Body of pancreas (tissue), 4 donors: ENCODE measurements at regions of chr2 and their contacts with region 1.

Region 1: GRCh38 chr2:165953655-165954606 is at the start of gene TTC21B:
- DNase-seq: peak; percentile 94 to 96 (median 96)
- ATAC-seq: peak; percentile 97
- H3K4me3 ChIP-seq: peak within 1 kb of the TSS; percentile 45 to 99
- H3K27ac ChIP-seq: peak within 1 kb of the TSS; percentile 87 to 96 (median 90)
- H3K4me1 ChIP-seq: peaks cover 34% of the 10 kb centered on the region
- H3K27me3 ChIP-seq: no peaks in the 10 kb centered on the region
- CTCF ChIP-seq: peak; percentile 65 to 92 (median 87)
- POLR2A ChIP-seq: peak; percentile 69 to 85 (median 83)
- total RNA-seq, gene TTC21B: 27.4 to 29.3 TPM

Region 2: DNA sequence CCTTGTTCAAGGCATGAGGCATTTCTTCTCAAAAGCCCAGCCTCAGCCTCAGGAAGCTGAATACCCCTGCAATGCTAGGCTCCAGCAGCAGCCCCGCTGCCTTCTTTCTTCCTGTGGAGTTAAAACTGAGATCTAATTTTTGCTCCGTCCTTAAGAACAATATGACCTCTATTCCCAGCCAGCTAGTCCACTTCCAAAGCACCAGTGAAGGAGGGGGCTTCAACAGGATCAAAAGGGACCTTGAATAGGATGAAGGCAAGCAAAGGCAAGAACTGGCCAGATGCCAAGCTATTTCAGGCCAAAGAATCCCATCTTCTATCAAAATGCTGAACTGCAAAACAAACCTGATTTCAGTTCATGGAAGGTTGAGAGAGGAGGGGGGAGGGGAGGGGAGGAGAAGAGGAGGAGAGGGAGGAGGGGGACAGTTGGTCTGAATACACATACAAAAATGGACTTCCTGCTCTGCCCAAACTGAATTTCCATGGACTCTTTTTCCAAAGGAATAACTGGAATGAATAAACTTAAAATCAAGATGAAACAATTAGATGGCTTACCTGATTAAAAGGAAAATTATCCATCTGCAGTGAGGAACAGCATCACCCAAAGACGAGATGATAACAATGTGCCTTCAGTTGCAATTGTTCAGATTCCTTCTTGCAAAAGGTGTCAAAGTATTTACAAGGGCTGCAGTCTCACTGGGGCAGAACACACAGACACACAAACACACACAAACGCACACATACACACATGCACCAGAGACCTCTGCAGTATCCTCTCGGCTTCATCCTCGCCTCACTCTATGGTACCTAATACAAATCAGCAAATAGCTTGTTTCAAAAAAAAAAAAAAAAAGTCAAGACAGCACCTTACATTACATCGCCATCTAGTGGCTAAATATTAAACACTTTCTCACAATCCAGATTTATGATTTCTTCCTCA is 173.6 kb after region 1 on chr2 and contains the start of gene SCN1A:
- intact Hi-C with region 1: loop called (anchors 10 kb)
- DNase-seq: peak in 1 of 4 donors; percentile 22
- ATAC-seq: peak; percentile 47
- H3K4me3 ChIP-seq: no peak within 1 kb of the TSS
- H3K27ac ChIP-seq: no peak within 1 kb of the TSS
- H3K4me1 ChIP-seq: no peaks in the 10 kb centered on the region
- H3K27me3 ChIP-seq: no peaks in the 10 kb centered on the region
- CTCF ChIP-seq: peak; percentile 38 to 91 (median 60)
- POLR2A ChIP-seq: no peak
- total RNA-seq, gene SCN1A: not detected